AG04450 (cell line): ENCODE measurements at regions of chr7 and their contacts with region 1.

Region 1: DNA sequence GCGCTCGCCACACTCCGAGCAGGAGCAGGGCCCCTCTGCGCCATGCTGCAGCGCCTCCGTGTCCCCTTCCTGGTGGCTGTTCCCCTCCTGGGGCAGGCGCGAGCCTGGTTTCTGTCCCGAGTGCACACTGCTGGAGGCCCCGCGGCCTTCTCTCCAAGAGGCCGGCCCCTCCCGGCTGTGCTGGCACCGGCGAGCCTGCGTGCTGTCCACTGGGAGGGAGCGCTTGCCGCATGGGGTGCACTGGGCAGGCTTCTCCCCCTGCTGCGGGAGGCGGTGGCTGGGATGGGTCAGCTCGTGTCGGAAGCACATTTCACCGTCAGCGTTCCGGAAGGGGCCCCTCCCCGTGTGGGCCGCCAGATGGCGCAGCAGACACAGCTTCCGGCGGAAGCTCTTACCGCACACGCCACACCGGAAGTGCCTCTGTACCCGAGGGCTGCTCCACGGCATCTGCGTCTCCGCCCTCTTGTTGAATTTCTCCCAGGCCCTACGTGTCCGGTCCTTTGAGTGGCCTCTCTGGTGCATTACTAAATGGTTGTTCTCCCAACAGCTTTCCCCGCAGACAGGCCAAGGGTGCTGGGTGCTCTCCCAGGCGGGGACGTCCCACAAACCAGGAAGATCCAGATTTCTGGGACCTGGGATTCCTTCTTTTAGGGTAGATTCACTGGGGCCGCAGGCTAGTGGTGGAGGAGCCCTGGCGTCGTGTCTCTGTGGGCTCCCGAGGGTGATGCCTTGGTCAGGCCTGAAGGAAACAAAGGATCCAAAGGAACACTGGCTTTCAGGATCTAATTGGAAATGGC is 18.7 kb downstream of the ZNF786 start:
- DNase-seq: no peak
- H3K4me3 ChIP-seq: no peak overlapping the region
- H3K27ac ChIP-seq: no peak overlapping the region
- H3K27me3 ChIP-seq: no peaks in the 10 kb centered on the region
- CTCF ChIP-seq: 0 out of 2 replicates have a peak, but pooled peaks have one; percentile 3

Region 2: DNA sequence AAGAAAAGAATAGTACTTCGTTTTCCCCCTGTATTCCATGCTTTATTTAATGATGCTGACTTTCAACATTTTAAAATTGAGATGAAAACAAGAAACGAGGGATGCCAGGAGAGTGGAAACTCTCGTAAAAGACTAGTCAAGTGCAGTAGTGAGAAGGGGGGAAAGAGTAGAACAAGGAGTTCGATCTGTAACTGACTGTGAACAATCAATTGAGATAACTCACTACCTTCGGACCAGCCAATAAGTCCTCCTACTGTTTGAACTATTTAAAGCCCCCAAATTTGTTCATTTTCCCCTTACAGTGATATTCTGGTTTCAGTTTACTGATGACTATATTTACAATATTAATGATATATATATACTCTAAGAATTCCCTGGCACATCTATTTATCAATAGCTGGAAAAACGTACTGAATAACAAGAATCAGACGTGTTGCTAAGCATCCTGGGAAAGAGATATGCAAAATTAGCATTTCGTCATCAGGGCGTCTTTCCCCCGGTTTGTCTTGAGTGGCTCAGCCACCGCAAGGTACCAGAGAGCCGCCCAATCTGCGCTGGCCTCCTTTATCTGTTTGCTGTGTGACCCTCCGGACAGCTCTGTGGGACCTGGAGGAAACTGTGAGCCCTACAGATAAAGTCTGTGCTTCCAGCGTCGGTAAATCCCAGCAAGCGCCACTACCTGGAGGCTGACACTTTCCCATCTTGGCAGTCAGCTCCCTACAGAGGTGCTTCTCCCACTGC is 84.7 kb before region 1 on chr7:
- CTCF ChIA-PET with region 1: interaction called, 17 read pairs
- POLR2A ChIA-PET with region 1: no interaction called
- DNase-seq: peak; percentile 72
- H3K4me3 ChIP-seq: peak overlapping the region; percentile 96
- H3K27ac ChIP-seq: peak overlapping the region; percentile 69
- H3K27me3 ChIP-seq: no peaks in the 10 kb centered on the region
- CTCF ChIP-seq: no peak

Region 3: DNA sequence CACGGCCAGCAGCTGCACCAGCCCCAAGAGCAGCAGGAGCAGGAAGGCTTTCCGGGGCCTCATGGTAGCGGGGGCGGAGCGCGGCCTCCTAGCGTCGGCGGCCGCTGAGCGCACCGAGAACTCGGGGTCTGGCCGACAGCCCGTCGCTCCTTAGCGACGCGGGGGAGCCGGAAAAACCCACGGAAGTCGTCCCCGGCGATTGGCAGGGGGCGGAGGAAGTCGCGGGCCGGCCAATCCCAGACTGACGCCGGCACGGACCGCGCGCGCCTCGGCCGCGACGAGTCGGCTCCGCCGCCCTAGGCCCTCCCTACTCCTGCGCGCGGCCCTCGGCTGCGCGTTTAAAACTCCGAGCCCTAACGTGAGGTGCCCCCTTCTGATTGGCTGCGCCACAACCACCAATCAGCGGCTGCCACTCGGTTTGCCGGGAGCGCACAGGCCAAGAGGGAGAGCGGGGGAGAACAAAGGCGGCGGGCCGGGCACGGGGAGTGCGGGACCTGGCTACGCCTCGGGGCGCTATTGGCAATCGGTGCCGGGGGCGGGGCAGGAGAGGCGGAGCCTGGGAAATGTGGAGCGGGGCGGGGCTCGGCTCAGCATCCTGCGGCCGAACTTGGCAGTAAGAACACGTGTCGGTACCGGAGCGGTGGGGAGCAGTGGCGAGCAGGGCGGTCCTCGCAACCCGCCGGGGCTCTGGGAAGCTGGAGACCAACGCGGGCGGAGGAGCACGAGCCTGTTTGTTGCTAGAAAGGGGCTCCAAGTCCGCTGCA is 43.3 kb before region 1 on chr7 and contains the start of gene PDIA4:
- CTCF ChIA-PET with region 1: interaction called, 48 read pairs
- POLR2A ChIA-PET with region 1: no interaction called
- DNase-seq: peak; percentile 98
- H3K4me3 ChIP-seq: peak within 1 kb of the TSS; percentile 84
- H3K27ac ChIP-seq: peak within 1 kb of the TSS; percentile 80
- H3K27me3 ChIP-seq: no peaks in the 10 kb centered on the region
- CTCF ChIP-seq: peak; percentile 35
- polyA plus RNA-seq, gene PDIA4: 215 and 227 TPM in 2 replicates

Region 4: GRCh38 chr7:149090397-149091195 is 18.8 kb after region 1 on chr7 and contains the start of gene ZNF786:
- CTCF ChIA-PET with region 1: interaction called, 14 read pairs
- POLR2A ChIA-PET with region 1: no interaction called
- DNase-seq: peak; percentile 61
- H3K4me3 ChIP-seq: peak within 1 kb of the TSS; percentile 79
- H3K27ac ChIP-seq: peak within 1 kb of the TSS; percentile 87
- H3K27me3 ChIP-seq: no peaks in the 10 kb centered on the region
- CTCF ChIP-seq: peak; percentile 83
- polyA plus RNA-seq, gene ZNF786: 2.2 TPM in 2 replicates

Region 5: GRCh38 chr7:149100821-149101220 is 29.0 kb after region 1 on chr7:
- CTCF ChIA-PET with region 1: no interaction called
- POLR2A ChIA-PET with region 1: no interaction called
- DNase-seq: no peak
- H3K4me3 ChIP-seq: no peak overlapping the region
- H3K27ac ChIP-seq: no peak overlapping the region
- H3K27me3 ChIP-seq: no peaks in the 10 kb centered on the region
- CTCF ChIP-seq: no peak